ENCODE measurements at regions of chr5 and their contacts with region 1.

Region 1: DNA sequence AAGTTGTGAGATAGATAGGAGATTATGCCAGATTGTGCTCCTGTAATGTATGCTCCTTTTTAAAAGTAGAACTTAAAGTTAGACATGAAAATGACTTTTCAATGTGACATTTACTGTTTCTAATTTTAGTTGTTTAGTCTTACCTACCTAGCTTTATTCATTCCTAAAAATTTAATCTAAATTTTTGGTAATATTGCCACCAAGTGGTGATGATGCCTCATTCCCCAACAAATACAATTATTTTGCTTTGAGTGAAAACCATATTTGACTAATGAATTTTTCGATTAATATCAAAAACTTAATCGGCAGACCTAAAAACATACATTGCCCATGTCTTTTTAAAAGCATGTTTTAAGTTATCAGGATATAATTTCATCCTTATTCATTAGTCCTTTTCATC is 25.6 kb downstream of the PPWD1 start:
- DNase-seq: peak in 1 of 3 donors; percentile 6
- H3K4me3 ChIP-seq: no peak overlapping the region
- H3K27ac ChIP-seq: no peak overlapping the region
- H3K4me1 ChIP-seq: no peaks in the 10 kb centered on the region
- H3K27me3 ChIP-seq: no peaks in the 10 kb centered on the region

Region 2: GRCh38 chr5:65611524-65611923 is 22.8 kb after region 1 on chr5:
- CTCF ChIA-PET with region 1: interaction called, 10 read pairs
- POLR2A ChIA-PET with region 1: no interaction called
- DNase-seq: no peak
- H3K4me3 ChIP-seq: no peak overlapping the region
- H3K27ac ChIP-seq: no peak overlapping the region
- H3K4me1 ChIP-seq: no peaks in the 10 kb centered on the region
- H3K27me3 ChIP-seq: no peaks in the 10 kb centered on the region